ENCODE measurements at regions of chr6 and their contacts with region 1.

Region 1: DNA sequence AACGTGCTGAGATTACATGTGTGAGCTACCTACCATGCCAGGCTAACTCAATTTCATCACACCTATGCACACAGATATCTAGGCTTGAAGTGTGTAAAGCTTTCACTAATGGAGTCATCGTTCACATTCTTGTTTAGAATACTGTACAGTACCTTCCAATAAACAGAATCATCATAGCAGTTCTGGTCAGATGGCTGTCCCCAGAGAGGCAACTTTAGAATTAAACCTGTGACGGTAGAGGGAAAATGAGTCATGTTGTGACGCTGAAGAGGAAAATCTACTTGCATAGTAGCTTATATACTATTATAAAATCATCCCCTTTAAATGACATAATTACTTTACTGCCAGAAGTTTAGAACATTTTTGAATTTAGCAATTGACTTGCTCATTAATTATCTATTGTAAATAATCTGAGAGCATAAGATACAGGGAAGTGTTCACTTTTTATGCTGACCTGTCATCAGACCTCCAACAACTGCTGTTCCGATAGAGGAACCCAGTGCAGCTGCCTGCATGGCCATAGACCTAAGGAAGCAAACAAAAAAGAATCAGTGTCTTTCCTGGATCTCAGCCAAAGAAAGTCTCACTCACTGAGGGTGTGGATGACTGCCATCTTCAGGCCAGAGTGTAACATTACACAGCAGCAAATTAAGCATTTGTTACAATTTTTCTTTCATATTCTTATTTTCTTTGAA is 29.8 kb downstream of the RHAG start:
- DNase-seq: peak; percentile 79
- H3K4me3 ChIP-seq: no peak overlapping the region
- H3K27ac ChIP-seq: no peak overlapping the region
- H3K4me1 ChIP-seq: peaks cover 3% of the 10 kb centered on the region
- H3K27me3 ChIP-seq: peaks cover 5 to 16% of the 10 kb centered on the region in 2 experiments
- CTCF ChIP-seq: peak; percentile 70 to 81
- POLR2A ChIP-seq: no peak

Region 2: DNA sequence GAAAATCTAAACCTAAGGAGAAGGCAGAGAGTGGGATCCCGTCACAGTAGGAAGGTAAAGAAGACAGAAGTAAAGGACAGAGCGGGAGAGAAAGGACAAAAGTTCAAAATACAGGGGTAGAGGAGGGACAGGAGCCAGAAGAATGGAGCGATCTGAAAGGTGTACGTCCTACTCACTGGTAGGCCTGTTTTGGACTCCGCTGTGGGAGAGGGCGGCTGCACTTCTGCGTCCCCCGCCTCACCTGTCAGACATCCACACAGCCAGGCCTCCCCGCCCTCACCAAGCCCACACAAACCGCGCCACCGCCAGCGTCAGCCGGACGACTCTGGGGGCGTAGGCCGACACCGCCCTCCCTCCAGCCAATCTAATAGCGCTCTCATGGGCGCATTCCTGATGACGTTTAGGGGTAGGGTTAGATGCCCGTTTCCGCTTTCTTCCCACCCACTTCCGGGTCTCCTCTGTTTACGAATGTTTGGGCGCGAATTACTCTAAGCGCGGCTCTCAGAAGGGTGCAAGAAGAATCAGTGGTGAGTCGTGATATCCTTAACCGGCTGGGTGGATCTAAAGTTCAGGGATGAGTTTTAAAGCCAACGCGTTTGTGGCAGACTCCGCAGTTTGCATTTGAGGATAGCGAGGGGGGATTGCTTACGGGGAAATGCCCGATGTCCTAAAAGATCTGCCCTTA is 143.8 kb before region 1 on chr6 and contains the starts of genes CENPQ and MMUT:
- CTCF ChIA-PET with region 1: no interaction called
- POLR2A ChIA-PET with region 1: no interaction called
- dilution Hi-C with region 1: no loop called
- intact Hi-C with region 1: loop called (anchors 1 kb)
- DNase-seq: peak; percentile 94
- H3K4me3 ChIP-seq: peak within 1 kb of the TSS; percentile 66 to 96 (median 92)
- H3K27ac ChIP-seq: peak within 1 kb of the TSS; percentile 68
- H3K4me1 ChIP-seq: peaks cover 19% of the 10 kb centered on the region
- H3K27me3 ChIP-seq: no peaks in the 10 kb centered on the region
- CTCF ChIP-seq: no peak
- POLR2A ChIP-seq: peak; percentile 72
- total RNA-seq, gene CENPQ: 8.0 and 8.2 TPM in 2 replicates
- total RNA-seq, gene MMUT: 15.7 and 16.2 TPM in 2 replicates

Region 3: GRCh38 chr6:49550492-49551077 is 56.3 kb before region 1 on chr6 and contains the start of gene C6orf141:
- CTCF ChIA-PET with region 1: interaction called, 10 read pairs
- POLR2A ChIA-PET with region 1: interaction called, 3 read pairs
- dilution Hi-C with region 1: no loop called
- intact Hi-C with region 1: loop called (anchors 1 kb)
- DNase-seq: peak; percentile 24
- H3K4me3 ChIP-seq: peak within 1 kb of the TSS; percentile 51 to 71 (median 59)
- H3K27ac ChIP-seq: peak within 1 kb of the TSS; percentile 11
- H3K4me1 ChIP-seq: peaks cover 24% of the 10 kb centered on the region
- H3K27me3 ChIP-seq: peaks cover 0 to 3% of the 10 kb centered on the region in 2 experiments
- CTCF ChIP-seq: no peak
- POLR2A ChIP-seq: no peak
- total RNA-seq, gene C6orf141: 13.7 and 15.5 TPM in 2 replicates

Region 4: DNA sequence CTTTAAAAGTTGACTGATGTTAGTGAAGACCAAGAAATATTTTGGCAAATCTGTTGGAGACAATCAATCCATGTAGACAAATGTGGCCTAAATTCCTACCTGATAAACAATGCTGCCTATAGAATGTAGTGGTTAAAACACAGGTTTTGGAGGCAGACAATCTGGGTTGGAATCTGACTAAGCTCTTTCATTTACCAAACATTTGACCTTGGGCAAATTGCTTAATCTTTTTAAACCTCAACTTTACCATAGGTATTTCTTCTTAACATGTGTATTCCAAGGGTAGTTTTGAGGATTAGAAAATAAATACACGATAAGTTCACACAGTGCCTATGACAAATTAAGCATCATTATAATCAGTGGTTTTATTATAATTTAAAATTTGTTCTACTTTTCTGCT is 18.3 kb after region 1 on chr6:
- CTCF ChIA-PET with region 1: interaction called, 13 read pairs
- POLR2A ChIA-PET with region 1: no interaction called
- dilution Hi-C with region 1: no loop called
- intact Hi-C with region 1: no loop called
- DNase-seq: no peak
- H3K4me3 ChIP-seq: no peak overlapping the region
- H3K27ac ChIP-seq: no peak overlapping the region
- H3K4me1 ChIP-seq: no peaks in the 10 kb centered on the region
- H3K27me3 ChIP-seq: peaks cover 0 to 2% of the 10 kb centered on the region in 2 experiments
- CTCF ChIP-seq: no peak
- POLR2A ChIP-seq: no peak

Measured in endothelial cell of umbilical vein (primary cell).